ENCODE measurements at regions of chr11 and their contacts with region 1.

Region 1: GRCh38 chr11:832321-833113 is at the start of gene CD151:
- DNase-seq: peak; percentile 55
- H3K4me3 ChIP-seq: peak within 1 kb of the TSS; percentile 50 to 70 (median 67)
- H3K27ac ChIP-seq: peak within 1 kb of the TSS; percentile 79
- H3K4me1 ChIP-seq: peaks cover 54% of the 10 kb centered on the region
- H3K27me3 ChIP-seq: no peaks in the 10 kb centered on the region
- CTCF ChIP-seq: no peak
- POLR2A ChIP-seq: no peak
- total RNA-seq, gene CD151: 515 and 605 TPM in 2 replicates

Region 2: GRCh38 chr11:749731-750130 is 82.8 kb before region 1 on chr11:
- CTCF ChIA-PET with region 1: no interaction called
- POLR2A ChIA-PET with region 1: no interaction called
- dilution Hi-C with region 1: no loop called
- intact Hi-C with region 1: no loop called
- DNase-seq: no peak
- H3K4me3 ChIP-seq: no peak overlapping the region
- H3K27ac ChIP-seq: no peak overlapping the region
- H3K4me1 ChIP-seq: peaks cover 17% of the 10 kb centered on the region
- H3K27me3 ChIP-seq: no peaks in the 10 kb centered on the region
- CTCF ChIP-seq: no peak
- POLR2A ChIP-seq: no peak

Region 3: DNA sequence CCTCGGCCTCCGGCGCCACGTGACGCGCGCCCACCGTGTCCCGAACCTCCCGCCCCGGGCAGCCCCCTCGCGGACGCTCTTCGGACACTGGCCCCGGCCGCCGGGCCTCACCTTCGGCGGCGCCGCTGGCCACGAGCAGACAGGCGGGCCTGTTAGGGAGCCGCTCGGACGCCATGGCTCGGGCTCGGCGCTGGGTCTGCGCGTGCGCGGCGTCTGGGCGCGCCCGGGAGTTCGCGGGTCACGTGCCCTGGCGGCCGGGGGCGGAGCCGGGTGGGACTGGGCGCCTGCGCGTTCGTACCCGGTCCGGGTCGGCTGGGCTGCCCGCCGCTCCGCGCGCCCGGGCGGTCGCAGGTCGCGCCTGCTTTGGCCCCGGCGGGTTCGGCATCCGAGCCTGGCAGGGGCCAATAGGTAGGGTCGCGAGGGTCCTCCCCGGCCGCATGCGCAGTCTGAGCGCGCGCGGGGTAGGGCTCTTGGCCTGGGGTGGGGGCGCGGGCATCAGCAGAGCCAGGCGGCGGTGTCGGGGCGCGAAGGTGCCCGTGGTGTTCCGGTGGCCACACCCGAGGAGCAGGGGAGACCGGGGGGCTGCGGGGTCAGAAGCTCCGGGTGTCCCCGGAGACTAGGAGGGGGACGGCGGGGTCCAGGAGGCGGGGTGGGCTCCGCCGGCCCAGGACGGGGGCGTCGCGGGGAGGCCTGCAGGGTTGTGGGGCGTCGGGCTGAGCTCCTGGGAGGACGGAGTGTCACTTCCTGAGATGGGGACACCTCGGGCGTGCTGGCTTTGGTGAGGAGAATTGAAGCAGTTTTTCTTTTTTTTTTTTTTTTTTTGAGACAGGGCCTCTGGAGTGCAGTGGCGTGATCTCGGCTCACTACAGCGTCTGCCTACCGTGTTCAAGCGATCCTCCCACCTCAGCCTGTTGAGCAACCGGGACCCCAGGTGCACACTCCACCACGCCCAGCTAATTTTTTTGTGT is 54.9 kb before region 1 on chr11 and contains the start of gene GATD1:
- CTCF ChIA-PET with region 1: no interaction called
- POLR2A ChIA-PET with region 1: no interaction called
- dilution Hi-C with region 1: no loop called
- intact Hi-C with region 1: no loop called
- DNase-seq: peak; percentile 84
- H3K4me3 ChIP-seq: peak within 1 kb of the TSS; percentile 48 to 97 (median 66)
- H3K27ac ChIP-seq: peak within 1 kb of the TSS; percentile 53
- H3K4me1 ChIP-seq: peaks cover 23% of the 10 kb centered on the region
- H3K27me3 ChIP-seq: no peaks in the 10 kb centered on the region
- CTCF ChIP-seq: no peak
- POLR2A ChIP-seq: peak; percentile 97
- total RNA-seq, gene GATD1: 78.5 and 83.1 TPM in 2 replicates

Region 4: DNA sequence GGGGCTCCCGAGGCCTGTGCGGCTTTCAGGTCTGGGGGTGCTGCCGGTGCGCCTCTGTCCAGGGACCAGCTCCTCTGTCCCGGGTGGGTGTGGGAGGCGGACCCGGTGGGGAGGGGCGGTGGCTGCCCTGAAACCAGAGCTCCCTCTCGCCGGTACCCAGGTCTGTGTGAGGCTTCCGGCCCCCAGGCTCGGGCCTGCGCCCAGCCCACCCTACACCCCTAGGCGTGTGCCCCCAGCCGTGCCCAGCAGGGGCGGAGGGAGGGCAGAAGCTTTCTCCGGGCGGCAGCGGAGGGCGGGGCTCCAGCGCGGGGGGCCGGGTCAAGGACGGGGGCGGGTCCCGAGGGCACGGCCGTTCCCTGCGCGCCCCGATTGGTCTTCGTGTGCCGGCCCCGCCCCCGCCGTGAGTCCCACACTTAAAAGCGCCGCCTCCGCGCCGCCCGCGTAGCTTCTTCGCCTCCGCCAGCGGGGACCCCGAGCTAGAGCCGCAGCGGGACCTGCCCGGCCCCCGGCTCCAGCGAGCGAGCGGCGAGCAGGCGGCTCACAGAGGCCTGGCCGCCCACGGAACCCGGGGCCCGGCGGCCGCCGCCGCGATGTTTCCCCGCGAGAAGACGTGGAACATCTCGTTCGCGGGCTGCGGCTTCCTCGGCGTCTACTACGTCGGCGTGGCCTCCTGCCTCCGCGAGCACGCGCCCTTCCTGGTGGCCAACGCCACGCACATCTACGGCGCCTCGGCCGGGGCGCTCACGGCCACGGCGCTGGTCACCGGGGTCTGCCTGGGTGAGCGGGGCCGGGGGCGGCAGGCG is 13.2 kb before region 1 on chr11:
- CTCF ChIA-PET with region 1: interaction called, 11 read pairs
- POLR2A ChIA-PET with region 1: interaction called, 15 read pairs
- dilution Hi-C with region 1: no loop called
- intact Hi-C with region 1: loop called (anchors 1 kb)
- DNase-seq: peak; percentile 85
- H3K4me3 ChIP-seq: peak overlapping the region; percentile 66 to 79 (median 77)
- H3K27ac ChIP-seq: peak overlapping the region; percentile 89
- H3K4me1 ChIP-seq: peaks cover 20% of the 10 kb centered on the region
- H3K27me3 ChIP-seq: no peaks in the 10 kb centered on the region
- CTCF ChIP-seq: peak in 1 of 2 donors; percentile 14
- POLR2A ChIP-seq: peak; percentile 98

Measured in endothelial cell of umbilical vein (primary cell).